ENCODE measurements at regions of chr7 and their contacts with region 1.

Region 1: GRCh38 chr7:77536413-77537135 is 521 bp upstream of the PTPN12 start:
- DNase-seq: peak; percentile 90 to 97 (median 94)
- ATAC-seq: peak; percentile 96
- H3K4me3 ChIP-seq: peak overlapping the region; percentile 100
- H3K4me3 Mint-ChIP-seq: peak overlapping the region; percentile 94 to 99 (median 96)
- H3K27ac ChIP-seq: peak overlapping the region; percentile 73
- H3K27ac Mint-ChIP-seq: peak overlapping the region; percentile 86 to 97 (median 94)
- H3K4me1 ChIP-seq: peaks cover 0 to 8% of the 10 kb centered on the region in 2 donors
- H3K4me1 Mint-ChIP-seq: peaks cover 5 to 38% (median 23%) of the 10 kb centered on the region in 7 donors
- H3K27me3 ChIP-seq: no peaks in the 10 kb centered on the region
- H3K27me3 Mint-ChIP-seq: peaks cover 0 to 12% (median 0%) of the 10 kb centered on the region in 5 donors

Region 2: GRCh38 chr7:76166404-76167255 is 1369.9 kb before region 1 on chr7:
- CTCF ChIA-PET with region 1: no interaction called
- POLR2A ChIA-PET with region 1: no interaction called
- intact Hi-C with region 1: loop called in 1 of 2 experiments (anchors 2 kb)
- DNase-seq: peak; percentile 90 to 95 (median 94)
- ATAC-seq: peak; percentile 96
- H3K4me3 ChIP-seq: peak overlapping the region; percentile 96
- H3K4me3 Mint-ChIP-seq: peak overlapping the region; percentile 84 to 92 (median 90)
- H3K27ac ChIP-seq: peak overlapping the region; percentile 84
- H3K27ac Mint-ChIP-seq: peak overlapping the region; percentile 79 to 99 (median 97)
- H3K4me1 ChIP-seq: peaks cover 0 to 4% of the 10 kb centered on the region in 2 donors
- H3K4me1 Mint-ChIP-seq: peaks cover 0 to 14% (median 6%) of the 10 kb centered on the region in 7 donors
- H3K27me3 ChIP-seq: no peaks in the 10 kb centered on the region
- H3K27me3 Mint-ChIP-seq: no peaks in the 10 kb centered on the region

Region 3: GRCh38 chr7:77199013-77199966 is 337.3 kb before region 1 on chr7 and contains the start of gene FGL2:
- CTCF ChIA-PET with region 1: no interaction called
- POLR2A ChIA-PET with region 1: no interaction called
- intact Hi-C with region 1: loop called in 1 of 2 experiments (anchors 5 kb)
- DNase-seq: peak in 6 of 9 donors; percentile 13 to 36 (median 33)
- ATAC-seq: peak; percentile 88
- H3K4me3 ChIP-seq: peak within 1 kb of the TSS; percentile 50
- H3K4me3 Mint-ChIP-seq: peak within 1 kb of the TSS; percentile 82 to 90 (median 84)
- H3K27ac ChIP-seq: peak within 1 kb of the TSS; percentile 58
- H3K27ac Mint-ChIP-seq: peak within 1 kb of the TSS; percentile 49 to 84 (median 81)
- H3K4me1 ChIP-seq: peaks cover 0 to 20% of the 10 kb centered on the region in 2 donors
- H3K4me1 Mint-ChIP-seq: peaks cover 18 to 49% (median 34%) of the 10 kb centered on the region in 7 donors
- H3K27me3 ChIP-seq: no peaks in the 10 kb centered on the region
- H3K27me3 Mint-ChIP-seq: no peaks in the 10 kb centered on the region
- total RNA-seq, gene FGL2: 2.8 to 129 (median 3.2) TPM

Region 4: GRCh38 chr7:77415823-77416622 is 120.6 kb before region 1 on chr7 and contains the start of gene GSAP:
- CTCF ChIA-PET with region 1: no interaction called
- POLR2A ChIA-PET with region 1: interaction called, 5 read pairs
- intact Hi-C with region 1: loop called (anchors 1 to 2 kb)
- DNase-seq: peak; percentile 36 to 59 (median 47)
- ATAC-seq: peak; percentile 83
- H3K4me3 ChIP-seq: peak within 1 kb of the TSS; percentile 75
- H3K4me3 Mint-ChIP-seq: peak within 1 kb of the TSS; percentile 67 to 87 (median 83)
- H3K27ac ChIP-seq: peak within 1 kb of the TSS; percentile 71
- H3K27ac Mint-ChIP-seq: peak within 1 kb of the TSS; percentile 56 to 89 (median 86)
- H3K4me1 ChIP-seq: peaks cover 7 to 8% of the 10 kb centered on the region in 2 donors
- H3K4me1 Mint-ChIP-seq: peaks cover 25 to 56% (median 49%) of the 10 kb centered on the region in 7 donors
- H3K27me3 ChIP-seq: no peaks in the 10 kb centered on the region
- H3K27me3 Mint-ChIP-seq: peaks cover 0 to 25% (median 0%) of the 10 kb centered on the region in 5 donors
- total RNA-seq, gene GSAP: 14.9 to 59.8 (median 29.2) TPM

Region 5: DNA sequence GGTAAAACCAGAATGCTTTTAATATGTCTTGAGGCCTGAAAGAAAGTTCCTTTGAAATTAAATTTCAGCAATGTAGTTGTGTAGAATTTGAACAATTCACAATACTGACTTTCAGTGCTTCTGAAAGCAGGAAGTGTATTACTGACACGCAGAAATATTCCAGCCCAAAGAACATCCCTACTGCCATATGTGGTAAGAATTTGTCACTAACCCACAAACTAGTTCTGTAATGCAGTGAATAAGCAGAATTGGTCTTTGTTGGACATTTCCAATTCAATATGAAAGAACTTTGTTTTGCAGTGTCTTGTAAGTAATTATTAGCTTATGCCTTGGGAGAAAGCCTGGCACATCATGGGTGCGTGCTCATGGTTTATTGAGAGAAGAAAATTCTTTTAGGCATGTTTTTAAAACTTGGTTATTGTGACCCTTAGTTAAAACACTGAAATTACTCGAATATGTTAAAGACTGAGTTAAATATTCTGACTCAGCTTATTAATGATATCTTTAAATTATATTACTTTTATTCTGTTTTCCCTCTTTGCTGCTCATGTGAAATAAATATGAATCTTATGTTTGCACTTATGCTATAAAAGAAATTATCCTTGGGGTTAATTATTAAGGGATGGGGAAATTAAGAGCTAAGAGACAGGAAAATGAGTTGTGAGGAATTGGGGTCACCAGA is 33.9 kb after region 1 on chr7:
- CTCF ChIA-PET with region 1: no interaction called
- POLR2A ChIA-PET with region 1: no interaction called
- intact Hi-C with region 1: loop called in 1 of 2 experiments (anchors 5 kb)
- DNase-seq: no peak
- ATAC-seq: peak; percentile 72
- H3K4me3 ChIP-seq: no peak overlapping the region
- H3K4me3 Mint-ChIP-seq: no peak overlapping the region
- H3K27ac ChIP-seq: no peak overlapping the region
- H3K27ac Mint-ChIP-seq: no peak overlapping the region
- H3K4me1 ChIP-seq: no peaks in the 10 kb centered on the region
- H3K4me1 Mint-ChIP-seq: peaks cover 0 to 24% (median 2%) of the 10 kb centered on the region in 7 donors
- H3K27me3 ChIP-seq: no peaks in the 10 kb centered on the region
- H3K27me3 Mint-ChIP-seq: no peaks in the 10 kb centered on the region

Region 6: DNA sequence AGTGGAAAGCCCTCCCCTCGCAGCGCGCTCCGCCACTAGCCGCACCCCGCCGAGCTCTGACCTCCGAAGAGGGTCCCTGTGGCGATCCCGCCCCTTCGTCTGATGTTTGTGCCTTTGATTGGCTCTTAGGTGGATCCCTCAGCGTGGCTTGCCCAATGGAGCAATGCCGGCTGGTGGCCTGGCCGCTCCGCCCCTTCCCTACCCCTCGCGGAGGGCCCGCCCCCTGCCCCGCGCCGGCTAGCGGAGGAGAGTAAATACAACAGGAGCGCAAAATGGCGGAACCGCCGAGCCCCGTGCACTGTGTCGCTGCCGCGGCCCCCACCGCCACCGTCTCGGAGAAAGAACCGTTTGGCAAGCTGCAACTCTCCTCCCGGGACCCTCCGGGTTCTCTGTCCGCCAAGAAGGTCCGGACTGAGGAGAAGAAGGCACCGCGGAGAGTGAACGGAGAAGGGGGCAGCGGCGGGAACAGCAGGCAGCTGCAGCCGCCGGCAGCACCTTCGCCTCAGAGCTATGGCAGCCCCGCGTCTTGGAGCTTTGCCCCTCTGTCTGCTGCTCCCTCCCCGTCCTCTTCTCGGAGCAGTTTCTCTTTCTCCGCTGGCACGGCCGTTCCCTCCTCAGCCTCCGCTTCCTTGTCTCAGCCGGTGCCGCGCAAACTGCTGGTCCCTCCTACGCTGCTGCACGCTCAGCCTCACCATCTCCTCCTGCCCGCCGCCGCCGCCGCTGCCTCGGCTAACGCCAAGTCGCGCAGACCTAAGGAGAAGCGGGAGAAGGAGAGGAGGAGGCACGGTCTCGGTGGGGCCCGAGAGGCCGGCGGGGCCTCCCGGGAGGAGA is 159.8 kb after region 1 on chr7 and contains the start of gene RSBN1L:
- CTCF ChIA-PET with region 1: no interaction called
- POLR2A ChIA-PET with region 1: no interaction called
- intact Hi-C with region 1: loop called (anchors 1 kb)
- DNase-seq: peak; percentile 96 to 98 (median 98)
- ATAC-seq: peak; percentile 98
- H3K4me3 ChIP-seq: peak within 1 kb of the TSS; percentile 99
- H3K4me3 Mint-ChIP-seq: peak within 1 kb of the TSS; percentile 89 to 100 (median 99)
- H3K27ac ChIP-seq: peak within 1 kb of the TSS; percentile 94
- H3K27ac Mint-ChIP-seq: peak within 1 kb of the TSS; percentile 94 to 98 (median 96)
- H3K4me1 ChIP-seq: peaks cover 13 to 15% of the 10 kb centered on the region in 2 donors
- H3K4me1 Mint-ChIP-seq: peaks cover 22 to 81% (median 65%) of the 10 kb centered on the region in 7 donors
- H3K27me3 ChIP-seq: no peaks in the 10 kb centered on the region
- H3K27me3 Mint-ChIP-seq: no peaks in the 10 kb centered on the region
- total RNA-seq, gene RSBN1L: 19.7 to 41.7 (median 30.8) TPM

Measured in naive thymus-derived CD4-positive, alpha-beta T cell (primary cell).